ENCODE measurements at regions of chr1 and their contacts with region 1.

Region 1: GRCh38 chr1:3772027-3772714 is 378 bp upstream of the SMIM1 start:
- DNase-seq: peak; percentile 65 to 88 (median 80)
- ATAC-seq: peak; percentile 91
- H3K4me3 ChIP-seq: peak overlapping the region; percentile 51
- H3K4me3 Mint-ChIP-seq: peak overlapping the region; percentile 57 to 83 (median 72)
- H3K27ac ChIP-seq: peak overlapping the region; percentile 58
- H3K27ac Mint-ChIP-seq: peak overlapping the region in 4 of 9 donors; percentile 23 to 73 (median 64)
- H3K4me1 ChIP-seq: peaks cover 5 to 12% of the 10 kb centered on the region in 2 donors
- H3K4me1 Mint-ChIP-seq: peaks cover 5 to 22% (median 11%) of the 10 kb centered on the region in 7 donors
- H3K27me3 ChIP-seq: no peaks in the 10 kb centered on the region
- H3K27me3 Mint-ChIP-seq: peaks cover 0 to 3% (median 0%) of the 10 kb centered on the region in 5 donors

Region 2: GRCh38 chr1:3624200-3625136 is 147.7 kb before region 1 on chr1 and contains the start of gene TPRG1L:
- CTCF ChIA-PET with region 1: no interaction called
- POLR2A ChIA-PET with region 1: no interaction called
- intact Hi-C with region 1: loop called in 1 of 2 experiments (anchors 10 kb)
- DNase-seq: peak; percentile 97 to 100 (median 99)
- ATAC-seq: peak; percentile 98
- H3K4me3 ChIP-seq: peak within 1 kb of the TSS; percentile 95
- H3K4me3 Mint-ChIP-seq: peak within 1 kb of the TSS; percentile 91 to 99 (median 96)
- H3K27ac ChIP-seq: peak within 1 kb of the TSS; percentile 78
- H3K27ac Mint-ChIP-seq: peak within 1 kb of the TSS; percentile 92 to 98 (median 96)
- H3K4me1 ChIP-seq: peaks cover 22% of the 10 kb centered on the region in 2 donors
- H3K4me1 Mint-ChIP-seq: peaks cover 27 to 57% (median 42%) of the 10 kb centered on the region in 7 donors
- H3K27me3 ChIP-seq: no peaks in the 10 kb centered on the region
- H3K27me3 Mint-ChIP-seq: peaks cover 0 to 13% (median 0%) of the 10 kb centered on the region in 5 donors
- total RNA-seq, gene TPRG1L: 15.6 to 61.4 (median 37.8) TPM

Region 3: GRCh38 chr1:3746830-3747521 is 25.2 kb before region 1 on chr1:
- CTCF ChIA-PET with region 1: no interaction called
- POLR2A ChIA-PET with region 1: interaction called, 3 read pairs
- intact Hi-C with region 1: loop called (anchors 1 kb)
- DNase-seq: peak; percentile 76 to 91 (median 86)
- ATAC-seq: peak; percentile 99
- H3K4me3 ChIP-seq: peak overlapping the region; percentile 52
- H3K4me3 Mint-ChIP-seq: peak overlapping the region; percentile 72 to 87 (median 78)
- H3K27ac ChIP-seq: peak overlapping the region; percentile 71
- H3K27ac Mint-ChIP-seq: peak overlapping the region in 4 of 9 donors; percentile 65 to 88 (median 73)
- H3K4me1 ChIP-seq: peaks cover 7 to 12% of the 10 kb centered on the region in 2 donors
- H3K4me1 Mint-ChIP-seq: peaks cover 15 to 40% (median 33%) of the 10 kb centered on the region in 7 donors
- H3K27me3 ChIP-seq: no peaks in the 10 kb centered on the region
- H3K27me3 Mint-ChIP-seq: peaks cover 0 to 4% (median 0%) of the 10 kb centered on the region in 5 donors

Region 4: GRCh38 chr1:3796215-3797061 is 24.3 kb after region 1 on chr1 and contains the start of gene LRRC47:
- CTCF ChIA-PET with region 1: no interaction called
- POLR2A ChIA-PET with region 1: interaction called, 8 read pairs
- intact Hi-C with region 1: loop called (anchors 1 to 2 kb)
- DNase-seq: peak; percentile 89 to 97 (median 94)
- ATAC-seq: peak; percentile 100
- H3K4me3 ChIP-seq: peak within 1 kb of the TSS; percentile 74
- H3K4me3 Mint-ChIP-seq: peak within 1 kb of the TSS; percentile 88 to 98 (median 93)
- H3K27ac ChIP-seq: peak within 1 kb of the TSS; percentile 69
- H3K27ac Mint-ChIP-seq: peak within 1 kb of the TSS; percentile 87 to 97 (median 93)
- H3K4me1 ChIP-seq: peaks cover 22 to 28% of the 10 kb centered on the region in 2 donors
- H3K4me1 Mint-ChIP-seq: peaks cover 8 to 52% (median 42%) of the 10 kb centered on the region in 7 donors
- H3K27me3 ChIP-seq: no peaks in the 10 kb centered on the region
- H3K27me3 Mint-ChIP-seq: peaks cover 9 to 11% (median 10%) of the 10 kb centered on the region in 5 donors
- total RNA-seq, gene LRRC47: 38.2 to 60.2 (median 43.9) TPM

Region 5: GRCh38 chr1:3900119-3900968 is 128.2 kb after region 1 on chr1 and contains the start of gene C1orf174:
- CTCF ChIA-PET with region 1: no interaction called
- POLR2A ChIA-PET with region 1: no interaction called
- intact Hi-C with region 1: loop called (anchors 1 to 2 kb)
- DNase-seq: peak; percentile 78 to 99 (median 96)
- ATAC-seq: peak; percentile 88
- H3K4me3 ChIP-seq: peak within 1 kb of the TSS; percentile 79
- H3K4me3 Mint-ChIP-seq: peak within 1 kb of the TSS; percentile 90 to 96 (median 94)
- H3K27ac ChIP-seq: peak within 1 kb of the TSS; percentile 94
- H3K27ac Mint-ChIP-seq: peak within 1 kb of the TSS; percentile 92 to 99 (median 96)
- H3K4me1 ChIP-seq: peaks cover 6 to 39% of the 10 kb centered on the region in 2 donors
- H3K4me1 Mint-ChIP-seq: peaks cover 23 to 71% (median 53%) of the 10 kb centered on the region in 7 donors
- H3K27me3 ChIP-seq: no peaks in the 10 kb centered on the region
- H3K27me3 Mint-ChIP-seq: no peaks in the 10 kb centered on the region
- total RNA-seq, gene C1orf174: 17.0 to 33.6 (median 27.1) TPM

Measured in naive thymus-derived CD4-positive, alpha-beta T cell (primary cell).